ENCODE measurements at regions of chr2 and their contacts with region 1.

Region 1: GRCh38 chr2:192162392-192163042 is 32.2 kb downstream of the TMEFF2 start:
- DNase-seq: no peak
- ATAC-seq: peak; percentile 94
- H3K4me3 ChIP-seq: no peak overlapping the region
- H3K27ac ChIP-seq: no peak overlapping the region
- H3K4me1 ChIP-seq: no peaks in the 10 kb centered on the region
- H3K27me3 ChIP-seq: peaks cover 0 to 2% of the 10 kb centered on the region in 2 experiments; a peak in 1 of 4 replicates
- CTCF ChIP-seq: peak; percentile 80 to 89 (median 83)
- EP300 ChIP-seq: no peak
- POLR2A ChIP-seq: no peak
- RAD21 ChIP-seq: peak; percentile 97

Region 2: GRCh38 chr2:190722061-190722759 is 1440.3 kb before region 1 on chr2:
- CTCF ChIA-PET with region 1: no interaction called
- POLR2A ChIA-PET with region 1: no interaction called
- RAD21 ChIA-PET with region 1: no interaction called
- SMC1A ChIA-PET with region 1: no interaction called
- in situ Hi-C with region 1: no loop called
- intact Hi-C with region 1: no loop called
- DNase-seq: peak; percentile 79
- ATAC-seq: peak; percentile 68
- H3K4me3 ChIP-seq: no peak overlapping the region
- H3K27ac ChIP-seq: peak overlapping the region; percentile 82
- H3K4me1 ChIP-seq: peaks cover 41% of the 10 kb centered on the region
- H3K27me3 ChIP-seq: no peaks in the 10 kb centered on the region
- CTCF ChIP-seq: no peak
- EP300 ChIP-seq: peak; percentile 71 to 89
- POLR2A ChIP-seq: no peak
- RAD21 ChIP-seq: peak; percentile 25; the same call in 1 of the 2 replicates

Region 3: GRCh38 chr2:191566344-191566743 is 596.2 kb before region 1 on chr2:
- CTCF ChIA-PET with region 1: interaction called, 38 read pairs
- POLR2A ChIA-PET with region 1: no interaction called
- RAD21 ChIA-PET with region 1: interaction called, 6 read pairs
- SMC1A ChIA-PET with region 1: interaction called, 8 read pairs
- in situ Hi-C with region 1: no loop called
- intact Hi-C with region 1: no loop called
- DNase-seq: no peak
- ATAC-seq: peak; percentile 91
- H3K4me3 ChIP-seq: no peak overlapping the region
- H3K27ac ChIP-seq: no peak overlapping the region
- H3K4me1 ChIP-seq: peaks cover 8% of the 10 kb centered on the region
- H3K27me3 ChIP-seq: no peaks in the 10 kb centered on the region
- CTCF ChIP-seq: peak; percentile 77 to 81 (median 79)
- EP300 ChIP-seq: no peak
- POLR2A ChIP-seq: no peak
- RAD21 ChIP-seq: peak; percentile 90

Region 4: GRCh38 chr2:191811807-191812602 is 350.5 kb before region 1 on chr2:
- CTCF ChIA-PET with region 1: interaction called, 254 read pairs
- POLR2A ChIA-PET with region 1: interaction called, 3 read pairs
- RAD21 ChIA-PET with region 1: interaction called, 148 read pairs
- SMC1A ChIA-PET with region 1: interaction called, 135 read pairs
- in situ Hi-C with region 1: loop called (anchors 5 kb)
- intact Hi-C with region 1: loop called (anchors 1 kb)
- DNase-seq: no peak
- ATAC-seq: peak; percentile 91
- H3K4me3 ChIP-seq: no peak overlapping the region
- H3K27ac ChIP-seq: no peak overlapping the region
- H3K4me1 ChIP-seq: no peaks in the 10 kb centered on the region
- H3K27me3 ChIP-seq: no peaks in the 10 kb centered on the region
- CTCF ChIP-seq: peak; percentile 64 to 87 (median 73)
- EP300 ChIP-seq: no peak
- POLR2A ChIP-seq: no peak
- RAD21 ChIP-seq: peak; percentile 90

Region 5: DNA sequence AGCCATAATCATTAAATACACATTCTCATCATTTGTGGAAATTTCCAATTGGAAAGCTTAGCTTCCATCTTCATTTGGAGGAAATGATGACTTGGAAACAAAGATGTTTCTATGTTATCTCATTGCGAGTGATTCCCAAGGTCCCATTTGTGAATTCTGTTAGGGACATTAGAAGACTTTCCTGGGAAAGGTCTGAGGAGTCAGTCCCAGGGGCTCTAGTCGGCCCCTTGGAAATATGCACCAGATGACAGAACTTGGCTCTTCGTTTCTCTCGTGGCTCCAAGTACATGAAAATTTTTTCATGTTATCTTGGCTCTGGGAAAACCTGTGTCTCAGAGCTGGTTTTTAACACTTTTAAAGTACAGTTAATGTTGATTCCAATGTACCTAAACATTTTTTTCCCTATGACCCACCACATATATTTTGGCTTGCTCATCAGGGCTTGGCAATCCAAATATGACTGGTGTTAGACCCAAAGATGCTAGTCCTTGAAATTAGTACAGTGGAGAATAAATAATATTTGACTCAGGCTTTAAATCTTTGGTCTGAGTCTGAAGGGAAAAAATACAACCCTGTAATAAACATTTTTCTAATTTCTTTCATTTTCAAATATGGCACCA is 300.3 kb before region 1 on chr2:
- CTCF ChIA-PET with region 1: interaction called, 289 read pairs
- POLR2A ChIA-PET with region 1: no interaction called
- RAD21 ChIA-PET with region 1: interaction called, 222 read pairs
- SMC1A ChIA-PET with region 1: interaction called, 244 read pairs
- in situ Hi-C with region 1: loop called (anchors 5 kb)
- intact Hi-C with region 1: no loop called
- DNase-seq: no peak
- ATAC-seq: no peak
- H3K4me3 ChIP-seq: no peak overlapping the region
- H3K27ac ChIP-seq: no peak overlapping the region
- H3K4me1 ChIP-seq: no peaks in the 10 kb centered on the region
- H3K27me3 ChIP-seq: peaks cover 0 to 6% of the 10 kb centered on the region in 2 experiments; a peak in 3 of 4 replicates
- CTCF ChIP-seq: no peak
- EP300 ChIP-seq: no peak
- POLR2A ChIP-seq: no peak
- RAD21 ChIP-seq: no peak

Region 6: GRCh38 chr2:191933307-191934105 is 229.0 kb before region 1 on chr2:
- CTCF ChIA-PET with region 1: interaction called, 12 read pairs
- POLR2A ChIA-PET with region 1: no interaction called
- RAD21 ChIA-PET with region 1: interaction called, 4 read pairs
- SMC1A ChIA-PET with region 1: interaction called, 11 read pairs
- in situ Hi-C with region 1: no loop called
- intact Hi-C with region 1: no loop called
- DNase-seq: peak; percentile 40
- ATAC-seq: peak; percentile 88
- H3K4me3 ChIP-seq: no peak overlapping the region
- H3K27ac ChIP-seq: no peak overlapping the region; the same call in 1 of the 2 replicates
- H3K4me1 ChIP-seq: peaks cover 16% of the 10 kb centered on the region
- H3K27me3 ChIP-seq: no peaks in the 10 kb centered on the region
- CTCF ChIP-seq: no peak
- EP300 ChIP-seq: no peak
- POLR2A ChIP-seq: no peak
- RAD21 ChIP-seq: no peak

Region 7: DNA sequence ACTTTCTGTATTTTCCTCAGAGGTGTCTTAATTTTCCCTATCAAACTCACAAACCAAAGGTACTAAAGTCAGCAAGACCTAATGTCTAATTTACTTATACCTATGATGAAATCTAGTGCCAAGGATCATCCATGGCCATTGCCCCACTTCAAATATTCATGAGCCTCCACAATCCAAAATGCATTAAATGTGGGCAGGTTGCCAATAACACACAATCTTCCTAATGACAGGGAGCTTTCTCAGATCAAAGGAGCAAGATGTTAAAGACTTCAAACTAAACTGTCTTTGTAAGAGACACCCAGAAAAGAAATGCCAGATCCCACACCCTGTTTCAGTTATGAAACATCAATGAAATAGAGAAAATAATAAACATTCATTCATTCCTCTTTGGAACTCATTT is 111.0 kb before region 1 on chr2:
- CTCF ChIA-PET with region 1: interaction called, 7 read pairs
- POLR2A ChIA-PET with region 1: no interaction called
- RAD21 ChIA-PET with region 1: interaction called, 4 read pairs
- SMC1A ChIA-PET with region 1: interaction called, 4 read pairs
- in situ Hi-C with region 1: no loop called
- intact Hi-C with region 1: loop called (anchors 5 kb)
- DNase-seq: no peak
- ATAC-seq: no peak
- H3K4me3 ChIP-seq: no peak overlapping the region
- H3K27ac ChIP-seq: no peak overlapping the region
- H3K4me1 ChIP-seq: no peaks in the 10 kb centered on the region
- H3K27me3 ChIP-seq: no peaks in the 10 kb centered on the region
- CTCF ChIP-seq: no peak
- EP300 ChIP-seq: no peak
- POLR2A ChIP-seq: no peak
- RAD21 ChIP-seq: no peak

Region 8: DNA sequence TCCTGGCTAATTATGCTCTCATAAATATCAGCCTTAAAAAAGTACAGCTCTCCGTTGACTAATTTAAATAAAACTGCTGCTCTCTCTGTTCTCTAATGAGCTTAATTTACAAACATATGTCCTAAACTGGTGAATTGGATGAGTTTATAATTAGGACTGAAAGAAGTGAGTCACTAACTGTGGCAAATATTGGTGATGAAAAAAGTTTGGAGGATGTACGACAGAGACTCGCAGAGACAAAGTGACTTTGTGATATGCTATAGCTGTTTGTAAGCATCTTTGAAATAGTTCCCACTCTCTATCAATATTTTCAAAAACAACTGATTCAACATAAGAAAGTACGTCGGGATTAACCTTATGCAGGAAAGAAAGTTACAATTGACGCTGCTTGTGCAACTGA is 171.1 kb after region 1 on chr2:
- CTCF ChIA-PET with region 1: no interaction called
- POLR2A ChIA-PET with region 1: no interaction called
- RAD21 ChIA-PET with region 1: no interaction called
- SMC1A ChIA-PET with region 1: no interaction called
- in situ Hi-C with region 1: no loop called
- intact Hi-C with region 1: no loop called
- DNase-seq: no peak
- ATAC-seq: no peak
- H3K4me3 ChIP-seq: no peak overlapping the region
- H3K27ac ChIP-seq: no peak overlapping the region
- H3K4me1 ChIP-seq: no peaks in the 10 kb centered on the region
- H3K27me3 ChIP-seq: no peaks in the 10 kb centered on the region
- CTCF ChIP-seq: no peak
- EP300 ChIP-seq: no peak
- POLR2A ChIP-seq: no peak
- RAD21 ChIP-seq: no peak